SK-N-SH (cell line): ENCODE measurements at regions of chr18 and their contacts with region 1.

Region 1: DNA sequence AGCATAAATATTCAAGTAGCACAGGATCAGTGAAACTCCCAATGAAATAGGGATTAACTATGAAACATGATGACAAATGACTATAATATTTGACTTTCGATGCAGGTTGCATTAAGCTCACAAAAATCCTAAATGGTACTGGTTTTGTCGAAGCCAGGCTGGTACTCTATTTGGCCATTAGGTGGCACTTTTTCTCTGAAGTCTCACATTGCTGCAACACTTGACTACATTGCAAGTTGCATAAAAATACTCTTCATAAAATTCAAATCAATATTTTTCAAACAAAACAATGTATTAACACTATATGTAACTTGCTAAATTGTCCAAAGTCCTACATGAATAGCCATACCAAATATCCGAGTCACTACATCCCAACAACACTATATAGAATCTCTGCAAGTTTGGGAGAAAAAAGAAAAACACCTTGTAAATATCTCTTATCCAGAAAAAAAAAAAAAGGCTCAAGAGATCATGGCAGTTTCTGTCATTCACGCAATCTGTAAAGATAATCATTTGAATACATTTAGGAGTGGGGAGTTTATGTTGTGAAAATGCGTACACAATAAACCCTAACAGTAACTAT is 9.5 kb downstream of the RTTN start:
- DNase-seq: peak; percentile 54
- H3K4me3 ChIP-seq: no peak overlapping the region
- H3K27ac ChIP-seq: no peak overlapping the region
- H3K4me1 ChIP-seq: no peaks in the 10 kb centered on the region
- H3K27me3 ChIP-seq: no peaks in the 10 kb centered on the region
- CTCF ChIP-seq: peak; percentile 96
- EP300 ChIP-seq: no peak
- RAD21 ChIP-seq: peak; percentile 91

Region 2: GRCh38 chr18:70421471-70422390 is 225.8 kb after region 1 on chr18:
- CTCF ChIA-PET with region 1: interaction called, 17 read pairs
- POLR2A ChIA-PET with region 1: no interaction called
- DNase-seq: no peak
- H3K4me3 ChIP-seq: no peak overlapping the region; a peak in 1 of 4 replicates
- H3K27ac ChIP-seq: peak overlapping the region; percentile 60 to 93; a peak in 3 of 4 replicates
- H3K4me1 ChIP-seq: peaks cover 12 to 34% of the 10 kb centered on the region in 2 experiments
- H3K27me3 ChIP-seq: no peaks in the 10 kb centered on the region
- CTCF ChIP-seq: no peak
- EP300 ChIP-seq: peak; percentile 72 to 99; a peak in 3 of 4 replicates
- RAD21 ChIP-seq: no peak; the same call in 1 of the 2 replicates

Region 3: DNA sequence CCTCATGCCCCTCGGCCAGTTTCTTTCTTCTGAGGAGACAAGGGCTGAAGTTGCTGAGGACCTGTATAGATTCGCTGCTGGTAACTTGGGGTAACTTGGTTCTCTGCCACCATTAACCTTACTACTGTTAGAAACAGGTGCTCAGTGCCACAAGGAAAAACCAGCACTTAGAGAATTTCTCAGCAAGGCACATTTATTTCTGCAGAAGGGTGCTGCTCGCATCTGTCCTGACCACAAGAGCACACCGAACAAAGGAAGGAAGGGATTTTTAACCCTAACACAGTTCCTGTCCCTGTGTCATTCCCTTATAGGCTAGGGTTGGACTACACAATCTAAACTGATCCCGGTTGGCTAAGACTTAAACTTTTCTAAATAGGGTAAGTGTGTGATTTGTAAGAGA is 247.0 kb after region 1 on chr18:
- CTCF ChIA-PET with region 1: interaction called, 127 read pairs
- POLR2A ChIA-PET with region 1: no interaction called
- DNase-seq: no peak
- H3K4me3 ChIP-seq: no peak overlapping the region
- H3K27ac ChIP-seq: no peak overlapping the region
- H3K4me1 ChIP-seq: no peaks in the 10 kb centered on the region; a peak in 1 of 4 replicates
- H3K27me3 ChIP-seq: no peaks in the 10 kb centered on the region
- CTCF ChIP-seq: no peak
- EP300 ChIP-seq: no peak
- RAD21 ChIP-seq: no peak

Region 4: GRCh38 chr18:70461323-70462077 is 265.6 kb after region 1 on chr18:
- CTCF ChIA-PET with region 1: interaction called, 108 read pairs
- POLR2A ChIA-PET with region 1: no interaction called
- DNase-seq: no peak
- H3K4me3 ChIP-seq: no peak overlapping the region
- H3K27ac ChIP-seq: no peak overlapping the region
- H3K4me1 ChIP-seq: peaks cover 0 to 10% of the 10 kb centered on the region in 2 experiments; a peak in 3 of 4 replicates
- H3K27me3 ChIP-seq: no peaks in the 10 kb centered on the region
- CTCF ChIP-seq: no peak
- EP300 ChIP-seq: no peak
- RAD21 ChIP-seq: no peak